CD4-positive, alpha-beta memory T cell (primary cell): ENCODE measurements at regions of chr10 and their contacts with region 1.

Region 1: DNA sequence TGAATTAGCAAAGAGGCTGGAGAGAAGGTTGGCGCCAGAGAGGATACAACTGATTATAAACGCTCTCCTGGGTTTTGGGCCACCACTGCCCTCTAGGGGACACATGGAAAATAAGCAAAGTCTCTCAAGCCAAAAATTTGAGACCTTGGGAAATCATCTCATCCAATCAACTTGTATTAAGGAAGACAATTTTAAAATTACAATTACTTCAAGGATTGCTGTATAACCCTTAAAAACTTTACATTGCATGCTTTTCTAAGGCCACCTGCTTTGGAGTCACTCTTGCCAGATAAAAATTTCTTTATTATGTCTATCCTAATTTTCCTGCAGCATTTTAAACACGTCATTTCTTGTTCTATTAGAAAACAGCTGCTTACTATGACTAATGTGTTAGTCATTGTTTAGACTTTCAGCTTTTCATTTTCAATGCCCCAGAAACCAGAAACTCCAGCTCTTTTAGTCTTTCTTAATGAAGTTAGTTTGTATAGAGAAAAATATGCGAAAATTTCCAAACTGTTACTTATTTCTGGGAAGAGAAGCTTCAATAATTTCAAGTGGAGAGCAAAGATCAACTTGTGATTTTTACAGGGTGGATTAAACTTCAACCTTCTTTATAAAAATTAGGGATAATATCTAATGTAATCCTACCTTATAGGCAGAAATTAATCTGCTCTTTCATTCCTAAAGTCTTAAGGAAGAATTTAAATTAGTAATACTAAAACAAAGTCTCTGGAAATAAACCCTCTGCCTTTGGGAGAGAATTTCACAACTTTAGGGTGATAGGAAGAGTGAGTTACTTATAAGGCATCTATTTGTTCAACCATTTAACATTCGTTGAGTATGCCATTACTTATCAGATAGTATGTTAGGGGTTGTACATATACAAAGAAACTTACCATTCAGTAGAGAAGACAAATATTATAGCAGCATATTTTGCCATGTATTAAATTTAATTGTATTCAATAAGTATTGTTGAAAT is 20.6 kb upstream of the RHOBTB1 start:
- DNase-seq: peak; percentile 32 to 41 (median 33)
- H3K4me3 ChIP-seq: no peak overlapping the region
- H3K4me3 Mint-ChIP-seq: no peak overlapping the region
- H3K27ac ChIP-seq: no peak overlapping the region
- H3K27ac Mint-ChIP-seq: no peak overlapping the region
- H3K4me1 ChIP-seq: no peaks in the 10 kb centered on the region
- H3K4me1 Mint-ChIP-seq: peaks cover 0 to 2% (median under 1%) of the 10 kb centered on the region in 4 donors
- H3K27me3 ChIP-seq: peaks cover 10% of the 10 kb centered on the region
- H3K27me3 Mint-ChIP-seq: peaks cover 15 to 25% of the 10 kb centered on the region in 2 donors

Region 2: GRCh38 chr10:61869774-61870525 is 905.4 kb after region 1 on chr10:
- CTCF ChIA-PET with region 1: no interaction called
- POLR2A ChIA-PET with region 1: no interaction called
- intact Hi-C with region 1: loop called (anchors 5 kb)
- DNase-seq: no peak
- H3K4me3 ChIP-seq: no peak overlapping the region
- H3K4me3 Mint-ChIP-seq: peak overlapping the region in 1 of 8 donors; percentile 28
- H3K27ac ChIP-seq: no peak overlapping the region
- H3K27ac Mint-ChIP-seq: no peak overlapping the region
- H3K4me1 ChIP-seq: peaks cover 4% of the 10 kb centered on the region
- H3K4me1 Mint-ChIP-seq: peaks cover 0 to 9% (median 3%) of the 10 kb centered on the region in 4 donors
- H3K27me3 ChIP-seq: no peaks in the 10 kb centered on the region
- H3K27me3 Mint-ChIP-seq: no peaks in the 10 kb centered on the region